CD8-positive, alpha-beta memory T cell (primary cell): ENCODE measurements at regions of chr15 and their contacts with region 1.

Region 1: DNA sequence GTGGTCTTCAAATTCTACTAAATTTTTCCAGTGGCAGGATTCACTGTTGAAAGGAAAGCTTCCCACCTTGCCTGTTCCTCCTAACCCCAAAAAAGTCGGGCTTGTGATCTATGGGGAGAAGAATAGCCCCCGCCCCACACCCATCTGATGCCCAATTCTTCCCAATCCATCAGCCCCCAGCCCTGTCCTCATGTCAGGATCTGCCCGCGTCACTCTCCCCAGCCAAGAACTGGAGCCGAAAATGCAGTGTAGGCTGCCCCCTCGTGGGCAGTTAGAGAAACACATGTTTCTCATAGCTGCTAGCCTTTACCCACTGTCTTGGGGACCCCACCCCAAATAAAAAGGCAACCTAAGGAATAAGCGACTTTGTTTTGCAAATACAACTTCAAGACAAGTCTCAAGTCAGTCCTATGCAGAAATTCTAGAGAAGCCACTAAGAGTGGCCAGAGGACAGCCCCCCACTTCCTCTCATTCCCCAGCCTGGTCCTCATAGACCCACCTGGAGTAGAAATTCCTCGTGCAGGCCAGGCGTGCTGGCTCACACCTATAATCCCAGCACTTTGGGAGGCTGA is 13.0 kb upstream of the CSK start:
- DNase-seq: peak; percentile 50 to 76 (median 58)
- H3K4me3 ChIP-seq: no peak overlapping the region
- H3K4me3 Mint-ChIP-seq: peak overlapping the region in 1 of 7 donors; percentile 35
- H3K27ac ChIP-seq: no peak overlapping the region
- H3K27ac Mint-ChIP-seq: peak overlapping the region in 3 of 8 donors; percentile 3 to 21 (median 17)
- H3K4me1 ChIP-seq: peaks cover 17% of the 10 kb centered on the region
- H3K4me1 Mint-ChIP-seq: peaks cover 13 to 23% (median 20%) of the 10 kb centered on the region in 3 donors
- H3K27me3 ChIP-seq: no peaks in the 10 kb centered on the region
- H3K27me3 Mint-ChIP-seq: peaks cover 5 to 8% of the 10 kb centered on the region in 2 donors

Region 2: GRCh38 chr15:74723754-74724334 is 45.0 kb before region 1 on chr15:
- CTCF ChIA-PET with region 1: interaction called, 14 read pairs
- POLR2A ChIA-PET with region 1: no interaction called
- DNase-seq: peak in 2 of 5 donors; percentile 5 to 25
- H3K4me3 ChIP-seq: no peak overlapping the region
- H3K4me3 Mint-ChIP-seq: peak overlapping the region in 2 of 7 donors; percentile 20 to 63
- H3K27ac ChIP-seq: no peak overlapping the region
- H3K27ac Mint-ChIP-seq: peak overlapping the region in 1 of 8 donors; percentile 21
- H3K4me1 ChIP-seq: peaks cover 7% of the 10 kb centered on the region
- H3K4me1 Mint-ChIP-seq: peaks cover 3 to 12% (median 7%) of the 10 kb centered on the region in 3 donors
- H3K27me3 ChIP-seq: peaks cover 3% of the 10 kb centered on the region
- H3K27me3 Mint-ChIP-seq: peaks cover 8 to 9% of the 10 kb centered on the region in 2 donors

Region 3: GRCh38 chr15:74787251-74788041 is 18.6 kb after region 1 on chr15:
- CTCF ChIA-PET with region 1: interaction called, 1,086 read pairs
- POLR2A ChIA-PET with region 1: interaction called, 25 read pairs
- DNase-seq: peak; percentile 88 to 99 (median 96)
- H3K4me3 ChIP-seq: peak overlapping the region; percentile 80
- H3K4me3 Mint-ChIP-seq: peak overlapping the region; percentile 85 to 97 (median 91)
- H3K27ac ChIP-seq: peak overlapping the region; percentile 69
- H3K27ac Mint-ChIP-seq: peak overlapping the region; percentile 92 to 99 (median 98)
- H3K4me1 ChIP-seq: peaks cover 75% of the 10 kb centered on the region
- H3K4me1 Mint-ChIP-seq: peaks cover 77 to 89% (median 84%) of the 10 kb centered on the region in 3 donors
- H3K27me3 ChIP-seq: no peaks in the 10 kb centered on the region
- H3K27me3 Mint-ChIP-seq: peaks cover 0 to 7% of the 10 kb centered on the region in 2 donors

Region 4: DNA sequence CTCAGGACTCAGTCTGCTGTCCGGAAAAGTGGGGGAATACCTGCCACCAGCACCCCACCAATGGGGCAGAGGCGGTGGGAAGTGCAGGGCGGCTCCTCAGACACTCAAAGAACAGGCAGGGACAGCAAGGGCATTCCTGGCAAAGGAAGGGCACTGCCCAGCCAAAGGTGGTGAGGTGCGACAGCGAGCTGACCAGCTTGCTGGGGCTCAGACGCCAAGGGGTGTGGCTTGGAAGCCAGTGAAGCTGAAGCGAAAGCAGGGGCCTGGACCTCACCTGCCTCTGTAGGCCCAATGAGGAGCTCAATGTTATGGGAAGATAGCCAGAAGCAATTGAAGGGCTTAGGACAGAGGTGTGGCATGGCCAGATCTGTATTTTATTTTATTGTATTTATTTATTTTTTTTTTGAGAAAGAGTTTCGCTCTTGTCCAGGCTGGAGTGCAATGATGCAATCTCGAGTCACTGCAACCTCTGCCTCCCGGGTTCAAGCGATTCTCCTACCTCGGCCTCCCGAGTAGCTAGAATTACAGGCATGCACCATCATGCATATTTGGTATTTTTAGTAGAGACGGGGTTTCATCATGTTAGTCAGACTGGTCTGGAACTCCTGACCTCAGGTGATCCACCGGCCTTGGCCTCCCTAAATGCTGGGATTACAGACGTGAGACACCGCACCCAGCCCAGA is 39.4 kb after region 1 on chr15:
- CTCF ChIA-PET with region 1: interaction called, 86 read pairs
- POLR2A ChIA-PET with region 1: no interaction called
- DNase-seq: no peak
- H3K4me3 ChIP-seq: no peak overlapping the region
- H3K4me3 Mint-ChIP-seq: no peak overlapping the region
- H3K27ac ChIP-seq: no peak overlapping the region
- H3K27ac Mint-ChIP-seq: peak overlapping the region; percentile 73 to 96 (median 84)
- H3K4me1 ChIP-seq: peaks cover 16% of the 10 kb centered on the region
- H3K4me1 Mint-ChIP-seq: peaks cover 26 to 35% (median 34%) of the 10 kb centered on the region in 3 donors
- H3K27me3 ChIP-seq: no peaks in the 10 kb centered on the region
- H3K27me3 Mint-ChIP-seq: no peaks in the 10 kb centered on the region

Region 5: DNA sequence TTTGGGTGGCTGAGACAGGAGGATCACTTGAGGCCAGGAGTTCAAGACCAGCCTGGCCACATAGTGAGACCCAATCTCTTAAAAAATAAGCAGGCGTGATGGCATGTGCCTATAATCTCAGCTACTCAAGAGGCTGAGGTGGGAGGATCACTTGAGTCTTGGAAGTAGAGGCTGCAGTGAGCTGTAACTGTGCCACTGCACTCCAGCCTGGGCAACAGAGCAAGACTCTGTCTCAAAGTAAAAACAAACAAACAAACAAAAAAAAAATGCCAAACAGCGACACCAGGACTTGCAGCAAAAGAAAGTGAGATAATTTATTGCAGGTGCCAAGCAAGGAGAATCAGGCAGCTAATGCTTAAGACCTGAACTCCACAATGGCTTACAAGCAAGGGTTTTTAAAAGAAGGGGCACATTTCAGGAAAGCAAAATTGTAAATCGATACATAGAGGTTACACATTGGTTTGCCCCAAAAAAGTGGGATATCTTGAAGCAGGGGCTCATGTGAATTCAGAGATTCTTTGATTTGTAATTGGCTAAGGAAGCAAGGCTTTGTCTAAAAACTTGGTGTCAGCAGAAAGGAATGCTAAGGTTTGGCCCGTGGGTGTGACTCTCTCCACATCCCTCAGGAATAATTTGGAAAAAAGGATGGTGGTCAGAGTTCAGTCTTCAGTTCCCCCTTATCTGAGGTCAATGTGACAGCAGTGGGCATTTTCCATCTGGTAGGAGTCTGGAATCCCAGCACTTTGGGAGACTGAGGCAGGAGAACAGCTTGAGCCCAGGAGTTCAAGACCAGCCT is 115.8 kb after region 1 on chr15:
- CTCF ChIA-PET with region 1: interaction called, 10 read pairs
- POLR2A ChIA-PET with region 1: no interaction called
- DNase-seq: no peak
- H3K4me3 ChIP-seq: no peak overlapping the region
- H3K4me3 Mint-ChIP-seq: no peak overlapping the region
- H3K27ac ChIP-seq: no peak overlapping the region
- H3K27ac Mint-ChIP-seq: no peak overlapping the region
- H3K4me1 ChIP-seq: peaks cover 6% of the 10 kb centered on the region
- H3K4me1 Mint-ChIP-seq: peaks cover 14 to 21% (median 17%) of the 10 kb centered on the region in 3 donors
- H3K27me3 ChIP-seq: no peaks in the 10 kb centered on the region
- H3K27me3 Mint-ChIP-seq: no peaks in the 10 kb centered on the region